ENCODE measurements at regions of chr16 and their contacts with region 1.

Region 1: GRCh38 chr16:71499775-71500364 is 10.7 kb upstream of the ZNF19 start:
- DNase-seq: peak; percentile 71
- H3K4me3 ChIP-seq: no peak overlapping the region
- H3K27ac ChIP-seq: no peak overlapping the region
- H3K4me1 ChIP-seq: no peaks in the 10 kb centered on the region
- H3K27me3 ChIP-seq: no peaks in the 10 kb centered on the region
- CTCF ChIP-seq: peak; percentile 46 to 65
- POLR2A ChIP-seq: no peak

Region 2: DNA sequence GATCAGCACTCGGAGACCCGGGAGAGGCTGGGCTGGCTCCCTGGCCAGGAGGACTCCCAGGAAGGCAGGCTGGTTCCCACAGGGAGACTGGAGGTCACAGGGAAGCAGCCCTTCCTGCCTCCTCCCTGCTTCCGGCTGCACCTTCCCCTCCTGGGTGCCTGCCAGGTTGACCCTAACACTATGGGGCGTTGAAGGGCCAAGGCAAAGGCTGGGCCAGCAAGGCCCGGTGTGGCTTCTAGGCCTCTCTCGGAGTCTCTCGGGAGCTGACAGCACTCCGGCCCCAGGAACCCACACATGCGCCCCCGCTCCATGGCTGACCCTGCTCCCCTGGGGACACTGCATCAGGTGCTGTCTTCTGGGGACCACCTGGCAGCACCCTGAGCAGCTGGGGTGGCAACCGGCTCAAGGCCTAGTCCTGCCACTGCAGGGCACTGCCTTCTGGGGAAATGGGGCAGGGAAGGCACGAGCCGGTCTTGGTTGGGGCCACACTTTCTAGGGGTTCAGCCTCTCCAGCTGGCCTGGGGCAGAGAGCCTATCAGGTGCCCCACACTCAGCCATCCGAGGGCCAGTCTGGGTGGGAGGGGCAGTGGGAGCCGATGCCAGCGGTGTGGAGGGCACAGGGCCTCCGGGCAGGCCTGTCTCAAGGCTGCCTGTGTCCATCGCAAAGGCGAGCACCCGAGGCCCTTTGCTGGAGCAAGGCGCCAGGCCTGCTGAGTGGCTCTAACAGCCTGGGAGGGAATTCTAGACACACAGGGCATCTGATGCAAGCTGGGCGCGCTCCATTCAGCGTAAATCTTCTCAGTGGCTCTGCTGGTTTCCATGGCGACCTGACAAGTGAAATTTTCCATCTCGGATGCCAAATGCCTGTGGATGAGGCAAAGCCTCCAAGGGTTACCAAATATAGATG is 808.4 kb before region 1 on chr16:
- CTCF ChIA-PET with region 1: no interaction called
- POLR2A ChIA-PET with region 1: no interaction called
- dilution Hi-C with region 1: no loop called
- intact Hi-C with region 1: no loop called
- DNase-seq: peak; percentile 54
- H3K4me3 ChIP-seq: no peak overlapping the region
- H3K27ac ChIP-seq: no peak overlapping the region
- H3K4me1 ChIP-seq: peaks cover 38% of the 10 kb centered on the region
- H3K27me3 ChIP-seq: no peaks in the 10 kb centered on the region
- CTCF ChIP-seq: no peak
- POLR2A ChIP-seq: no peak

Region 3: GRCh38 chr16:71412270-71413160 is 87.4 kb before region 1 on chr16:
- CTCF ChIA-PET with region 1: interaction called, 229 read pairs
- POLR2A ChIA-PET with region 1: no interaction called
- dilution Hi-C with region 1: no loop called
- intact Hi-C with region 1: loop called (anchors 1 kb)
- DNase-seq: peak; percentile 59
- H3K4me3 ChIP-seq: no peak overlapping the region
- H3K27ac ChIP-seq: no peak overlapping the region
- H3K4me1 ChIP-seq: no peaks in the 10 kb centered on the region
- H3K27me3 ChIP-seq: no peaks in the 10 kb centered on the region
- CTCF ChIP-seq: peak; percentile 74 to 81
- POLR2A ChIP-seq: no peak

Region 4: GRCh38 chr16:71426072-71426879 is 73.6 kb before region 1 on chr16:
- CTCF ChIA-PET with region 1: interaction called, 11 read pairs
- POLR2A ChIA-PET with region 1: no interaction called
- dilution Hi-C with region 1: no loop called
- intact Hi-C with region 1: no loop called
- DNase-seq: peak; percentile 61
- H3K4me3 ChIP-seq: peak overlapping the region; percentile 10 to 15 (median 13)
- H3K27ac ChIP-seq: no peak overlapping the region
- H3K4me1 ChIP-seq: no peaks in the 10 kb centered on the region
- H3K27me3 ChIP-seq: peaks cover 3 to 7% of the 10 kb centered on the region in 2 experiments
- CTCF ChIP-seq: no peak
- POLR2A ChIP-seq: no peak

Region 5: DNA sequence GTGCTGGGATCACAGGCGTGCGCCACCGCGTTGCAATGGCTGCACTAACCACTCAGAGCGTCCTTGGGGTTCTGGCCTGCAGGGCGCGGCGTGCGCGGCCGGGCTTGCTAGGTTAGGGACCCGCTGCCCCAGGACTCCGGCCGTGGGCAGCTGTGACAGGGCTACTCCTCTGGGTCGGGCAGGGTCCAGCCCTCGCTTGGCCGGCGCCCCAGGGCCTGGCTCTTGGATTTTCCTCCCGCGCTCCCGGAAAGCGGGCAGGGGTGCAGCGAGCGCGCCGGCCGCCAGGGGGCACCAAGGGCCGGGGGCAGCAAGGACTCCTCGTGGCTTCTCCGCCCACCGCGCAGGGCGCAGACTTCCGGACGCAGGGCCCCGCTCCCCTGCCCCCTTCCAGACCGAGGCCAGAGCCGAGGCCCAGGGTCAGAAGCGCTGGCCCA is 58.5 kb before region 1 on chr16:
- CTCF ChIA-PET with region 1: interaction called, 13 read pairs
- POLR2A ChIA-PET with region 1: no interaction called
- dilution Hi-C with region 1: no loop called
- intact Hi-C with region 1: loop called (anchors 1 kb)
- DNase-seq: no peak
- H3K4me3 ChIP-seq: no peak overlapping the region
- H3K27ac ChIP-seq: no peak overlapping the region
- H3K4me1 ChIP-seq: no peaks in the 10 kb centered on the region
- H3K27me3 ChIP-seq: no peaks in the 10 kb centered on the region
- CTCF ChIP-seq: peak; percentile 50 to 57
- POLR2A ChIP-seq: no peak

Region 6: DNA sequence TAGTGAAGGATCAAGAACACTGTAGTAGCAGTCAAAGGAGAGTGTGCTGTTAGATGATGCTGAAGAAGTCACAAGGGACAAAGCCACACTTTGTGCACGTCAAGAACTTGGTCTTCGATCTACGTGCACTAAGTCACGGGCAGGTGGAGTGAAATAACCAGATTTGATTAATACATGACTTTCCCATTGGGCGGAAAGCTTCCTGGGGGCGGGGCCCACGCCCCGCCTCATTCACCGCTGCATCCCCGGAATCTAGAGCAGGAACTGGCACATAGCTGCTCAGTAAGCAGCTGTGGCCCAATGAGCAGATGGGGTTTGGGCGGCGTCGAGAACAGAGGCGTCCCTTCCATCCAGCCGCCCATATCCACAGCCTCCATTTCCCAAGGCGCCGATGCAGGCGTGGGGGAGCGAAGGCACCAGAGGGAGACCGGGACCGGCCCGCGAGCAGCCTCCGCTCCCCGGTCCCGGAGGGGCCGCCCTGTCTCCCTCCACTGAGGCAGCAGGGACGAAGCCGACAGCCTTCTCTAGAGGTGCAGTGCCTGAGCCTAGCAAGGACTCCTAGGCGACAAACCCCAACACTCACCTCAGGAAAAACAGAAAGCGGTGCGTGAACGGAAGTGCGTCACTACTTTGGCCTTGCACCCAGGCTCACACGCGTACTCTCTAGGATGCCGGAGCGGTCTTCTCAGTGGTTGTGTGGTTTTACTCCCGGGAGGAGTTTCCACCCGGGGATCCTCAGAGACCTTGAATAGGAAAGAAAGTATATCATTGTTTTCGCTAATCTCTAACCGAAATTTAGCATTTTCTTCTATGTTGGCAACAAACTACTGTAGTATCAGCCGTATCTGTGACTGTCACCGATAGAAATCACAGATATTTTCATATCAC is 15.6 kb before region 1 on chr16:
- CTCF ChIA-PET with region 1: interaction called, 15 read pairs
- POLR2A ChIA-PET with region 1: no interaction called
- dilution Hi-C with region 1: no loop called
- intact Hi-C with region 1: no loop called
- DNase-seq: peak; percentile 88
- H3K4me3 ChIP-seq: peak overlapping the region; percentile 16 to 80 (median 67)
- H3K27ac ChIP-seq: peak overlapping the region; percentile 76
- H3K4me1 ChIP-seq: peaks cover 4% of the 10 kb centered on the region
- H3K27me3 ChIP-seq: no peaks in the 10 kb centered on the region
- CTCF ChIP-seq: no peak
- POLR2A ChIP-seq: peak; percentile 70